ENCODE measurements at regions of chr3 and their contacts with region 1.

Region 1: GRCh38 chr3:27134165-27134796 is 234.9 kb downstream of the NEK10 start:
- DNase-seq: peak; percentile 68
- H3K4me3 Mint-ChIP-seq: no peak overlapping the region
- H3K27ac Mint-ChIP-seq: no peak overlapping the region
- H3K4me1 Mint-ChIP-seq: no peaks in the 10 kb centered on the region
- H3K27me3 Mint-ChIP-seq: no peaks in the 10 kb centered on the region

Region 2: DNA sequence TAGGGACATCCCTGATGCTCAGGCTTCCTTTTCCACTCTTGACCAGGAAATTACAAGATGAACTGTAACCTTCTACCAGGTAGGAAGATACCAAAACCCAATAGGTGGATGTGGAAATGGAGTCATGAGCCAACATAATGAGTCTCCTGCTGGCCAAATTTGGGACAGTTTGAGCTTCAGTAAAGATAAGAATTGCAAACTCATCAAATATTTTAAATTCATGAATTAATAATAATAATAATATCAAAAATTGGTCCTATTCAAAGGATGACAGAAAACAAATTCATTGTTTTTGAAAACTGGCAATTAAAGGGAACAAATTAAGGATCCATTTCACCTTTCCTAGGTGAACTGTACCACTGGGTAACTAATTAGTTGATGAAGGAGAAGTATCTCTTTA is 74.8 kb before region 1 on chr3:
- CTCF ChIA-PET with region 1: no interaction called
- DNase-seq: no peak
- H3K4me3 Mint-ChIP-seq: no peak overlapping the region
- H3K27ac Mint-ChIP-seq: no peak overlapping the region
- H3K4me1 Mint-ChIP-seq: no peaks in the 10 kb centered on the region
- H3K27me3 Mint-ChIP-seq: no peaks in the 10 kb centered on the region

Region 3: GRCh38 chr3:27105904-27106303 is 28.4 kb before region 1 on chr3:
- CTCF ChIA-PET with region 1: no interaction called
- DNase-seq: no peak
- H3K4me3 Mint-ChIP-seq: no peak overlapping the region
- H3K27ac Mint-ChIP-seq: no peak overlapping the region
- H3K4me1 Mint-ChIP-seq: no peaks in the 10 kb centered on the region
- H3K27me3 Mint-ChIP-seq: no peaks in the 10 kb centered on the region

Region 4: DNA sequence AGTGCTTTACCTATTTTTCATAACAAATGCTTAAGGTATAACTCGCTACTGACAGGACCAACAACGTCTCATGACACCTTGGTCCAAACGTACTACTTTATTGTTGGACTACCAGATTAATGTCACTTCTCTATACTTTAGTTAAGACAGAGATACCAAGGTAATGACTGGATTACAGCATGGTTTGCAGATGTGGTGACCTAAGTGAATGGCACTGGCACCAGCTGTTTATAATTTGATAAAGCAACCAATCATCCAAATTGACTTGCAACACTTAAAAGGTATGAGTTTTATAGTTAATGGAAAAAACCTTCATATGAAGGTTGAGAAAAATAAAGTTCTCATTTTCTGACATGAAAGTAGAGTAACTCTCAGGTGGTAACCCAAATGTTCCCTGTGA is 25.9 kb after region 1 on chr3:
- CTCF ChIA-PET with region 1: no interaction called
- DNase-seq: no peak
- H3K4me3 Mint-ChIP-seq: no peak overlapping the region
- H3K27ac Mint-ChIP-seq: no peak overlapping the region
- H3K4me1 Mint-ChIP-seq: no peaks in the 10 kb centered on the region
- H3K27me3 Mint-ChIP-seq: no peaks in the 10 kb centered on the region

Region 5: GRCh38 chr3:27253831-27254230 is 119.5 kb after region 1 on chr3:
- CTCF ChIA-PET with region 1: interaction called, 18 read pairs
- DNase-seq: peak; percentile 21
- H3K4me3 Mint-ChIP-seq: no peak overlapping the region
- H3K27ac Mint-ChIP-seq: no peak overlapping the region
- H3K4me1 Mint-ChIP-seq: no peaks in the 10 kb centered on the region
- H3K27me3 Mint-ChIP-seq: no peaks in the 10 kb centered on the region

Measured in activated naive CD4-positive, alpha-beta T cell treated with anti-CD3 and anti-CD28 coated beads, Interleukin-2, amount 10 ng/mL, durations not matched to agents 7 days and 5 days (primary cell).